ENCODE measurements at regions of chr17 and their contacts with region 1.

Region 1: DNA sequence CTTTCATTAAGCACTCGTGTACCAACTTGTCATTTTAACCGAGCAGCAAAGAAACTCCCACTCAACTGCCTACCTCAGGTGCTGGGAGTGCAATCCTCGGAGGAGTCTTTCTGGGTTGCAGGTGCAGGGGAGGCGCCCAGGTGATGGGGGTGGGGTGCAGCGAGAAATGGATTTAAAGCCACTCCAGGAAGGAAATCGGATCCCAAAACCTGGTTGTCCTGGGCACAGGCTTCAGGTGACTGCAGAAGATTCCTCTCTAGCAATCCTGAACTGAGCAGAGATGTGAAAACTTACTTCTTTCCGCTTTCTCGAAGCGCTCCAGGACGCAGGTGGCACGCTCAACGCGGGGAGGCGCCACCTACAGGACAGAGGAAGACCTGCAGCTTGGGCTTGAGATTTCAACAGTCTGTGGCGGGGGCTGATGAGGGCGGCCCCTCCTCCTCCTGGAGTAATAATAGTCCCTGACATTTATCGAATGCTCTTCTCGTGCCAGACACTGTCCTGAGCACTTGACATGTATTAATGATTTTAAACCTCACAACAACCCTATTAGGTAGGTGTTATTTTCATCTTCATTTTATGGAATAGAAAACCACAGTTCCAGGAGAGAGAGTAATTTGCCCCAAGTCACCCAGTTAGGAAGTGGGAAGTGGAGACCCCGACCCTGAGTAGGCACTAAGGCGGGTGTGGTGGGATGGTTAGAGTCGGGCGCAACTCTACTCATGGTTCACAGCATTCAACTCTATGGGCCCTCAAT is 27.2 kb upstream of the SKAP1 start:
- DNase-seq: peak; percentile 72 to 83 (median 81)
- ATAC-seq: peak; percentile 97
- H3K4me3 ChIP-seq: no peak overlapping the region
- H3K27ac ChIP-seq: no peak overlapping the region
- H3K4me1 ChIP-seq: peaks cover 3 to 23% of the 10 kb centered on the region in 2 experiments; a peak in 4 of 5 replicates
- H3K27me3 ChIP-seq: no peaks in the 10 kb centered on the region
- CTCF ChIP-seq: peak; percentile 88 to 98 (median 91)
- EP300 ChIP-seq: no peak
- POLR2A ChIP-seq: no peak
- RAD21 ChIP-seq: peak; percentile 74 to 86

Region 2: DNA sequence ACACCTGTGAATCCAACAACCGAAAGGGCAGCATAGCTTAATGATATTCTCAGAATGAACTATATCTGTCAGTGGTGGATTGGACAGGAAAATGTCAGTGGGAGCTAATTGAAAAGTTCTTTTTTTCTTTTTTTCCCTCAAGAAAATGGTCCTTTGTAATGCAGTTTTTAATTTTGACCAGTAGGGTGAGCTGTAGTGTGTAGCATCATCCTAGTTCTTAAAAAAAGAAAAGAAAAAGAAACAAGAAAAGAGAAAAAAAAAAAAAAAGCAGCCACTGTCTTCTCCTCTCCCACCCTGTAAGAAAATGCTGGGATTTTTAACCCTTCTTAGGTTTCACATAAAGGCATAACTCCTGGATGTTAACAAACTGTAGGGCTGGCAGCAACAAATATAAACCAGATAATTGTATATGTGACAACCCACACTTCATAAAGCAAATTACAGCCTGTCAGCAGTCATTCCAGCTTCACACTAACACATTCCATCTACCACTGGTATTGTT is 105.4 kb before region 1 on chr17:
- CTCF ChIA-PET with region 1: interaction called, 3 read pairs
- POLR2A ChIA-PET with region 1: no interaction called
- in situ Hi-C with region 1: no loop called
- intact Hi-C with region 1: loop called (anchors 2 kb)
- DNase-seq: peak; percentile 23 to 55 (median 32)
- ATAC-seq: no peak
- H3K4me3 ChIP-seq: no peak overlapping the region
- H3K27ac ChIP-seq: no peak overlapping the region
- H3K4me1 ChIP-seq: peaks cover 0 to 2% of the 10 kb centered on the region in 2 experiments; a peak in 1 of 5 replicates
- H3K27me3 ChIP-seq: no peaks in the 10 kb centered on the region
- CTCF ChIP-seq: peak; percentile 48 to 78 (median 49); a peak in 5 of 6 replicates
- EP300 ChIP-seq: no peak
- POLR2A ChIP-seq: no peak
- RAD21 ChIP-seq: peak; percentile 76 to 82

Region 3: GRCh38 chr17:48406936-48407567 is 50.2 kb before region 1 on chr17:
- CTCF ChIA-PET with region 1: no interaction called
- POLR2A ChIA-PET with region 1: no interaction called
- in situ Hi-C with region 1: no loop called
- intact Hi-C with region 1: no loop called
- DNase-seq: no peak
- ATAC-seq: no peak
- H3K4me3 ChIP-seq: no peak overlapping the region
- H3K27ac ChIP-seq: no peak overlapping the region
- H3K4me1 ChIP-seq: no peaks in the 10 kb centered on the region
- H3K27me3 ChIP-seq: no peaks in the 10 kb centered on the region
- CTCF ChIP-seq: no peak
- EP300 ChIP-seq: no peak
- POLR2A ChIP-seq: no peak
- RAD21 ChIP-seq: no peak

Region 4: GRCh38 chr17:48441231-48441711 is 16.0 kb before region 1 on chr17:
- CTCF ChIA-PET with region 1: no interaction called
- POLR2A ChIA-PET with region 1: interaction called, 6 read pairs
- in situ Hi-C with region 1: no loop called
- intact Hi-C with region 1: loop called (anchors 2 kb)
- DNase-seq: no peak
- ATAC-seq: no peak
- H3K4me3 ChIP-seq: no peak overlapping the region
- H3K27ac ChIP-seq: no peak overlapping the region
- H3K4me1 ChIP-seq: peaks cover 9 to 63% of the 10 kb centered on the region in 2 experiments; a peak in 4 of 5 replicates
- H3K27me3 ChIP-seq: no peaks in the 10 kb centered on the region
- CTCF ChIP-seq: no peak
- EP300 ChIP-seq: no peak
- POLR2A ChIP-seq: no peak
- RAD21 ChIP-seq: no peak

Region 5: DNA sequence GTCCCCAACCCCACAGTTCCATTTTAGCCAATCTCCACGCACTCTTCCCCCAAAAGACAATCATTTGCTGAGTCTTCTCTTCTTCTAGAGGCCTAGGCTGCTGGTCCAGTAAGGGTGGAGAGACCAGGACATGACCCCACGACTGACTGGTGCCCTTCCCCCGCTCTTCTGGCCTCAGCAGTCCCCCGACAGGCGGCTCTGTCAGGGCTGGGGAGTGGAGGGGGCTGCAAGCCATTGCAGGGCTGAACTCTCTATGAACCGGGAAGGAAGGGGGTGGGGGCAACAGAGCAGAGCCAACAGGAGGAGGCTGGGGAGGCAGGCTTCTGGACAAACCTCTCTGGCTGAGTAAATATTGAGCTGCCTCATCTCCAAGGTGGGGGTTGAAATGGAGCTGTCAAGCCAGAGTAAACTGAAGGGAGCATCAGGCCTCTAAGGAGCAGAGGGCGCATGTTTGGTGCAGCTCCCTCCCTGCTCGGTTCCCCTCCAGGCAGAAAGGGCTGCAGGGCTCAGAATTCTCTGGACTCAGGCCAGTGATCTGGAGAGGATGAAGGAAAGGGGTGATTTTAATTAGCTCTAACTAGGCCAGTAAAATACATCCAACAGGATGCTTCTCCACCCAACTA is 64.9 kb after region 1 on chr17:
- CTCF ChIA-PET with region 1: no interaction called
- POLR2A ChIA-PET with region 1: no interaction called
- in situ Hi-C with region 1: no loop called
- intact Hi-C with region 1: no loop called
- DNase-seq: peak; percentile 92 to 94 (median 92)
- ATAC-seq: peak; percentile 95
- H3K4me3 ChIP-seq: no peak overlapping the region
- H3K27ac ChIP-seq: peak overlapping the region; percentile 86
- H3K4me1 ChIP-seq: peaks cover 10 to 34% of the 10 kb centered on the region in 2 experiments
- H3K27me3 ChIP-seq: no peaks in the 10 kb centered on the region
- CTCF ChIP-seq: no peak
- EP300 ChIP-seq: peak; percentile 66; the same call in 1 of the 2 replicates
- POLR2A ChIP-seq: peak; percentile 44; the same call in 1 of the 2 replicates
- RAD21 ChIP-seq: no peak